ENCODE measurements at regions of chr18 and their contacts with region 1.

Region 1: GRCh38 chr18:5057386-5058348 is 139.4 kb downstream of the AKAIN1 start:
- DNase-seq: peak; percentile 38
- CTCF ChIP-seq: peak; percentile 65

Region 2: GRCh38 chr18:3162181-3162580 is 1895.5 kb before region 1 on chr18:
- in situ Hi-C with region 1: no loop called
- DNase-seq: no peak
- CTCF ChIP-seq: no peak

Region 3: GRCh38 chr18:4119813-4120212 is 937.9 kb before region 1 on chr18:
- in situ Hi-C with region 1: loop called (anchors 10 kb)
- DNase-seq: no peak
- CTCF ChIP-seq: no peak

Region 4: DNA sequence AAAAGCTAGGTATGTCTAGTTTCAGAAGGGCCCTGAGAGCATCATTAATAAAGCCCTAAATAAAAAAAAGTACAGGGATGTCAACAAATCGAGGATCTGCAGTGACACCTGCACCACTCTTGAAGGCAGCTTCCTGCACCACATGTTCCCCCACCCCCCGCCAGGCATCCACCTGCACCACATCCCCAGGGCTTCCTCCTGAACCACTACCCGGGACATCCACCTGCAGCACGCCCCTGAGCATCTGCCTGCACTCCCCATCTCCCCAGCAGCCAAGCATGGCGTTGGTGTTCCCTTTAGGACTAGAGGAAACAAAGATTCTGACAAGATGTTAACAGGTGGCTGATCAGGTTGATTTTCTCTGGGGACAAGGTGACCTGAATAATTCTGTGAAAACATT is 657.7 kb before region 1 on chr18:
- in situ Hi-C with region 1: no loop called
- DNase-seq: no peak
- CTCF ChIP-seq: no peak

Region 5: GRCh38 chr18:4842287-4842686 is 215.4 kb before region 1 on chr18:
- in situ Hi-C with region 1: no loop called
- DNase-seq: no peak
- CTCF ChIP-seq: no peak

Measured in GM13976 (cell line).